Activated naive CD4-positive, alpha-beta T cell treated with anti-CD3 and anti-CD28 coated beads for 36 hours (primary cell): ENCODE measurements at regions of chr13 and their contacts with region 1.

Region 1: DNA sequence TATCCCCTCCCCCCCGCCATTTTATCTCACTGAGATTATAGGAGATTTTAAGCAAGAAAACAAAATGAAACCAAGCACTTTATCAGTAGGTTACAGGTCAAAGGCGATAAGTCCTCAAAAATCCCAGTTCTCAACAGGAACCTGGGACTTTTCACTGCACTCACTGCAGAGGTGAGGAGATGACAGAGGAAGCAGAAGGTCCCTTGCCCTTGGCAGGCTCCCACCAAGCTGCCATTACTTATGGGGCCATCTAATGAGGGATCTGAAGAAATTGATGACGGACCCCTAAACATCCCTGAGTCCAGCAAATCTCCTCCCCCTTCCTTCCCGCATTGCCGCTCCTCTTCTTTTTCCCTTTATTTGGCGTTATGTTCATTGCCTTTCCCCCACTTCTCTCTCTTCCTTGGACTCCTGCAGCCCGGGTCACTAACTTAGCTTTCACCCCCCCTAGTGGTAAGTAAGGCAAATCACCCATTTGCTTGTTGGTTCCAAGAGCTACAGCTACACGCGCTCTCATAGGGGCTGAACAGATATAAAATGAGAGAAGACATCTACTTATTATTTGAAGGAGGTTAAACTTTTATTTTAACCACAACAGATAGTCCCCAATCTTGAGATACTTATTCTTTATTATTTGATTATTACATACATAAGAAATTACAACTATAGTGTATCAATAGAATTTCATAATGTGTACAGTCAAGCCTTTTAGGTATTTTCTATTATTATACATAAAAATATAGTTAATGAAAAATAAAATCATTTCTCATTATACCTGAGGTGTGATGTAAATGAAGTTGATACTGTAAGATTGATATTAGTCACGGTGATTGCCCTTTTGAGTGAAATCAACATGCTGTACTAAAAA is 52.0 kb upstream of the ARGLU1 start:
- DNase-seq: peak; percentile 25
- H3K4me3 Mint-ChIP-seq: no peak overlapping the region
- H3K27ac Mint-ChIP-seq: no peak overlapping the region
- H3K4me1 Mint-ChIP-seq: peaks cover 2% of the 10 kb centered on the region
- H3K27me3 Mint-ChIP-seq: peaks cover 17% of the 10 kb centered on the region

Region 2: GRCh38 chr13:106083620-106084350 is 536.1 kb before region 1 on chr13:
- CTCF ChIA-PET with region 1: no interaction called
- intact Hi-C with region 1: loop called (anchors 5 kb)
- DNase-seq: peak; percentile 19
- H3K4me3 Mint-ChIP-seq: no peak overlapping the region
- H3K27ac Mint-ChIP-seq: no peak overlapping the region
- H3K4me1 Mint-ChIP-seq: no peaks in the 10 kb centered on the region
- H3K27me3 Mint-ChIP-seq: peaks cover 5% of the 10 kb centered on the region

Region 3: GRCh38 chr13:106561551-106562170 is 58.3 kb before region 1 on chr13:
- CTCF ChIA-PET with region 1: interaction called, 12 read pairs
- intact Hi-C with region 1: loop called (anchors 1 kb)
- DNase-seq: peak; percentile 76
- H3K4me3 Mint-ChIP-seq: no peak overlapping the region
- H3K27ac Mint-ChIP-seq: peak overlapping the region; percentile 30
- H3K4me1 Mint-ChIP-seq: peaks cover 67% of the 10 kb centered on the region
- H3K27me3 Mint-ChIP-seq: no peaks in the 10 kb centered on the region

Region 4: DNA sequence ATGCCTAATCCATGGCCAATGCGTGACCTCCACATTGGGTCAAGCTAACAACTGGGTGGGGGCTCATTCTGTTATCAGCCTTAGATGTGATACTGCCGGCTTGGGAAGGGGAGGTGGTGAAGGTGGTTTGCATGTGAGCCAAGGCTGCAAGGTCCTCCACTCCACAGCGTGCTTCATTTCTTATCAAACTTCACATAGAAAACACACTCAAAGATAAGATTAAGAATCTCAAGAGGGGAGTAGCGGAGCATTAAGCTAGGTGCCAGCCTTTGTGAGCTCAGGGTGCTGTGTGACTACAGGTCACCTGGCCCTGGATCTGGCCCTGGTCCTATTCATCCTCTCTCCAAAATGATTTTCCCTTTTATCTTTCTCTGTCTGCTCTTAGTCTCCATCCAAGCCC is 38.7 kb before region 1 on chr13:
- CTCF ChIA-PET with region 1: no interaction called
- intact Hi-C with region 1: no loop called
- DNase-seq: no peak
- H3K4me3 Mint-ChIP-seq: no peak overlapping the region
- H3K27ac Mint-ChIP-seq: no peak overlapping the region
- H3K4me1 Mint-ChIP-seq: no peaks in the 10 kb centered on the region
- H3K27me3 Mint-ChIP-seq: no peaks in the 10 kb centered on the region

Region 5: DNA sequence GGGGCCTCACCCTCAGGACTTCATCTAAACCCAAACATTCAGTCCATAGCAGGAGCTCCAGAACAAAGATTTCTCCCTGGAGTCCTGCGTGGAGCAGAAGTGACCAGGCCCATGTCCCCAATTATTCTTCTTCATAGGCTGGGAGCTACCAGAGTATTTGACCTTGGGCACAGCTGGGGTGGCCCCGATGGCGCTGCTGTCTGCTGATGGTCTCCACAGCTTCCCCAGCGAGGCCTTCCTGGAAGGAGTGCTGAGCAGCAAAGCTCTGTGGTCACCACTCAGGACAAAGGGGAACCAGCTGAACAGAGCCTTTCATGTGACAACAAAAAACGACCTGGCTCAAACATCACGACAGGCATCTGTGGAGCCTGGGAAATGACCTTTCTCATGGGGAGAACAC is 10.7 kb after region 1 on chr13:
- CTCF ChIA-PET with region 1: interaction called, 10 read pairs
- intact Hi-C with region 1: no loop called
- DNase-seq: no peak
- H3K4me3 Mint-ChIP-seq: no peak overlapping the region
- H3K27ac Mint-ChIP-seq: no peak overlapping the region
- H3K4me1 Mint-ChIP-seq: no peaks in the 10 kb centered on the region
- H3K27me3 Mint-ChIP-seq: peaks cover 23% of the 10 kb centered on the region

Region 6: DNA sequence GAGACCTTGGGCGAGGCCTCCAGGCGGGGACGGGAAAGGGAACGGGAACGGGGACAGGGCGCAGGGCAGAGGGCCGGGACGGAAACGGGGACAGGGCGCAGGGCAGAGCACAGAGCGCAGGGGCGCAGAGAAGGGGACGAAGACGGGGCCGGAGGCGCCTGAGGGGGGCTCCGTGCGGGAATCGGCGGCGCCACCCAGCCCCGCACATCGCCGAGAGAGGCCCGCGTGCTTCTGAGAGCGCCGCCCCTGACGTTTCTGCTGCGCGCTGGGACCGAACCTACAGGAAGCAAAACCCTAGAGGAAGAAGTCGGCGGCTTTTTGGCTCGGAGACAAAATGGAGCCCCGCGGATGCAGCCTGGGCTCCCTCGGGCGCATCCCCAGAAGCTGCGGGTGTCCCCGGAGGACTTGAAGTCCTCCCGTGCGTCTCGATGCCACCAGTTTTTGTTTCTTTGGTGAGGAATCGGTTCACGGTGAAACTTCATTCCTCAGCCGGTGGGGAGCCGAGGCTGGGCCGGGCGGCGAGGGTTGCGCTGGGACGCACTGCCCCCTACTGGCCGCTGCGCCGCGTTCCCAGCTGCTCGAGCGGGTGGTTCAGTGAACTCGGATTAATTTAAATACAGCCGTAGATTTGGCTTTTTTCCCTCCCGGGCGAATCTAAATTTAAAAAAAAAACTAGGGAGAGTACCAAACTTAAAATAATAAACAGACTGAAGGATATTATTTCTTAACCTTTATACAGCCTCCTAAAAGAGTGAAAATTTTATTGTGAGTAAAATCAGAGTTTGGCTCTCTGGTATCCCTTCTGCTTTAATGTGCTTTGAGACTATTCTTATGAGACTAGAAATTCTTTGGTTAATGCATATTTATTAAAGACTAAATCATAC is 298.0 kb after region 1 on chr13:
- CTCF ChIA-PET with region 1: interaction called, 3 read pairs
- intact Hi-C with region 1: loop called (anchors 1 kb)
- DNase-seq: peak; percentile 73
- H3K4me3 Mint-ChIP-seq: peak overlapping the region; percentile 72
- H3K27ac Mint-ChIP-seq: no peak overlapping the region
- H3K4me1 Mint-ChIP-seq: peaks cover 7% of the 10 kb centered on the region
- H3K27me3 Mint-ChIP-seq: peaks cover 44% of the 10 kb centered on the region

Region 7: DNA sequence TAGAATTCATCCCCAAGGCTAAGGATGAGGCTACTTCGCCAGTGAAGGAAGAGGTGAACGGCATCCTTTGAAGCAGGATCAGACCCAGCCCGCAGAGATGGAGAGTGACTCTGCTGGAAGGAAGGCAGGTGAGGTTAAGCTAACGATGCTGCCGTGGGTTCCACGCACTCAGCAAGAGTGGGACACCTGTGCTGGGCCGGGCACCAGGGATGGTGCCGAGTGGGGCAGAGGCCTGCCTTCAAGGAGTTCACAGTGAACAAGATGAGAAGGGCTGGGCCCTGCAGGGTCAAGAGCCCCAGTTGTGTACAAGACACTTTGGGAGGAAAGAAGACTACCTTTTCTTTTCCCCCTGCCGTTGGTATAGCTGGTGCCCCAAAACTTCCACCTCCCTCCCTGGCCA is 988.8 kb after region 1 on chr13:
- CTCF ChIA-PET with region 1: no interaction called
- intact Hi-C with region 1: no loop called
- DNase-seq: no peak
- H3K4me3 Mint-ChIP-seq: no peak overlapping the region
- H3K27ac Mint-ChIP-seq: no peak overlapping the region
- H3K4me1 Mint-ChIP-seq: no peaks in the 10 kb centered on the region
- H3K27me3 Mint-ChIP-seq: no peaks in the 10 kb centered on the region